Endothelial cell of umbilical vein (primary cell): ENCODE measurements at regions of chr18 and their contacts with region 1.

Region 1: DNA sequence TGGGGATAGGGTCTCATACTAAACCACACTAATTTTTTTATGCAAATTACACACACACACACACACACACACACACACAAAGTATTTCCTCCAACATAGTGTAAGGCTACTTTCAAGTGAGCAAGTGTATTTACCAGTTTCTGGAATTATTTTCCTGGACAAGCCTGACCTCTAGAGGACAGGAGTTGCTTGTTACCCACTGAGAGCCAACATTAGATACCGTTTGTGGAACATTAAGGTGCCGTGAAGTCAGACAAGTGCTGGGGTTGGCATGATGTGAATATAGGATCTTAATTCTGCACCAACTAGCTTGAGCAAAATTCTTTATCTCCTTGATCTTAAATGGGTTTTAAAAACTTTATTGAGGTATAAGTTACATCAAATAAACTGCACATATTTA is 39.3 kb upstream of the SERPINB2 start:
- DNase-seq: peak; percentile 62
- H3K4me3 ChIP-seq: no peak overlapping the region
- H3K27ac ChIP-seq: no peak overlapping the region
- H3K4me1 ChIP-seq: no peaks in the 10 kb centered on the region
- H3K27me3 ChIP-seq: no peaks in the 10 kb centered on the region
- CTCF ChIP-seq: peak; percentile 56 to 57
- POLR2A ChIP-seq: no peak

Region 2: GRCh38 chr18:63511286-63511685 is 336.9 kb before region 1 on chr18:
- CTCF ChIA-PET with region 1: interaction called, 173 read pairs
- POLR2A ChIA-PET with region 1: no interaction called
- dilution Hi-C with region 1: no loop called
- intact Hi-C with region 1: no loop called
- DNase-seq: peak; percentile 33
- H3K4me3 ChIP-seq: no peak overlapping the region
- H3K27ac ChIP-seq: no peak overlapping the region
- H3K4me1 ChIP-seq: no peaks in the 10 kb centered on the region
- H3K27me3 ChIP-seq: peaks cover 5 to 11% of the 10 kb centered on the region in 2 experiments
- CTCF ChIP-seq: peak; percentile 52 to 56
- POLR2A ChIP-seq: no peak

Region 3: GRCh38 chr18:63523660-63524059 is 324.5 kb before region 1 on chr18:
- CTCF ChIA-PET with region 1: interaction called, 173 read pairs
- POLR2A ChIA-PET with region 1: no interaction called
- dilution Hi-C with region 1: no loop called
- intact Hi-C with region 1: loop called (anchors 1 kb)
- DNase-seq: no peak
- H3K4me3 ChIP-seq: no peak overlapping the region
- H3K27ac ChIP-seq: no peak overlapping the region
- H3K4me1 ChIP-seq: no peaks in the 10 kb centered on the region
- H3K27me3 ChIP-seq: peaks cover 5 to 14% of the 10 kb centered on the region in 2 experiments
- CTCF ChIP-seq: no peak
- POLR2A ChIP-seq: no peak

Region 4: DNA sequence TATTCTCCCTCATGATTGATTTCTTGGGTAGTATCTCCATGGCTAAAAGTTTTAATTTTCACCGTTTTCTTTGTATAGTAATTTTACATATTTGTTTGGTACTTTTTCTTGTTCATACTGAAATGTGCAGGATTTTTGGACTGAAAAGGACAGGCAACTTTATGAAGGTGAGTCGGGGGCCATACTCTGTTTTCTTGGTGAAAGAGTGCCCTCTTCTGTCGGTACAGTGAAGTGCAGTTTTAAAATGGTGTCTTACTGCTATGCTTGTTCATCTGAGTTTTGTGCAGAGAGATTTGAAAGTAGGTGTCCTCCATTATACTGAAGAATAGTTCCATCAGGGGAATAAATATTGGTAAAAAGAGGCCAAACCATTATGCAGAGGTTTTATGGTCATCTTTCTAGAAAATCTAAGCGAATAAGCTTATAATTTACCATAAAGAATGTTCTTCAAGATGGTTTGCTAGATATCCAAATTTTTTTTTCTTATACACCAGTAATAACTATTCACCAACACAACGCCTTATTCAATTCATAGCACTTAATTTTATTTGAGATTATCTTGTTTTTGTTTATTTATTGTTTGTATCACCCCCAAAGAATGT is 269.7 kb before region 1 on chr18:
- CTCF ChIA-PET with region 1: interaction called, 10 read pairs
- POLR2A ChIA-PET with region 1: no interaction called
- dilution Hi-C with region 1: no loop called
- intact Hi-C with region 1: loop called (anchors 5 kb)
- DNase-seq: peak; percentile 53
- H3K4me3 ChIP-seq: no peak overlapping the region
- H3K27ac ChIP-seq: no peak overlapping the region
- H3K4me1 ChIP-seq: no peaks in the 10 kb centered on the region
- H3K27me3 ChIP-seq: no peaks in the 10 kb centered on the region
- CTCF ChIP-seq: peak; percentile 52 to 63
- POLR2A ChIP-seq: no peak

Region 5: DNA sequence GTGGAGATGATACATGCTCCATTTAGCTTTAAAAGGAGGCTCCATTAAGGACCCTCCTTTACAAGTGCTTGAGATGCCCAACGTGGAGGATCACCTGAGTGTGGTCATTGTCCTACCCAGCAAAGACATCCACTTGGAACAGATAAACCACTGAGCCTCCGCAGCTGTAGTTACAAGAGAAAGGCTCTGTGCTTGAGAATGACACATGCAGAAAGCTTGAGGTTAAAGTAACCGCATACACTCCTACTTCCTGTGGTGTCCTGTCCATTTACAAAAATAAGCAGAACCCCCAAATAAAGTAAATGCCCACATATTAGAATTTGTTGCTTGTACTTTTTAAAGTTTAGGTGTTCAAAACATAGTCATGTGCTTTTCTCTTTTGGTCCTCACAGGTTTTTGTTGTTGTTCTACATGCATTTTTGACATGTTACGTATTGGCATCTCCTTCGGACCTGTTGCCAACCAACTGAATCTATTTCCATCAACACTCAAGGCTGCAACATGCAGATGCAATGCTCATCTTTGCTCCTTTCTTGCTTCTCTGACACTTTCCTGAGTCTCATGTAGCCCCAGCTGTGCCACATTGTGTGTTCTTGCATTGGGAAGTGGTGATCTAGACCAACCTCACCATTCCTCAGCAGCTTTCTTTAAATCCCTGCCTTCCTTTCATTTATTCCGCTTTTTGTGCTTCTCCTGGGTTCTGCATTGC is 16.9 kb before region 1 on chr18:
- CTCF ChIA-PET with region 1: interaction called, 10 read pairs
- POLR2A ChIA-PET with region 1: no interaction called
- dilution Hi-C with region 1: no loop called
- intact Hi-C with region 1: no loop called
- DNase-seq: no peak
- H3K4me3 ChIP-seq: no peak overlapping the region
- H3K27ac ChIP-seq: no peak overlapping the region
- H3K4me1 ChIP-seq: no peaks in the 10 kb centered on the region
- H3K27me3 ChIP-seq: peaks cover 12 to 18% of the 10 kb centered on the region in 2 experiments
- CTCF ChIP-seq: no peak
- POLR2A ChIP-seq: no peak